Calu3 (cell line): ENCODE measurements at regions of chr3 and their contacts with region 1.

Region 1: DNA sequence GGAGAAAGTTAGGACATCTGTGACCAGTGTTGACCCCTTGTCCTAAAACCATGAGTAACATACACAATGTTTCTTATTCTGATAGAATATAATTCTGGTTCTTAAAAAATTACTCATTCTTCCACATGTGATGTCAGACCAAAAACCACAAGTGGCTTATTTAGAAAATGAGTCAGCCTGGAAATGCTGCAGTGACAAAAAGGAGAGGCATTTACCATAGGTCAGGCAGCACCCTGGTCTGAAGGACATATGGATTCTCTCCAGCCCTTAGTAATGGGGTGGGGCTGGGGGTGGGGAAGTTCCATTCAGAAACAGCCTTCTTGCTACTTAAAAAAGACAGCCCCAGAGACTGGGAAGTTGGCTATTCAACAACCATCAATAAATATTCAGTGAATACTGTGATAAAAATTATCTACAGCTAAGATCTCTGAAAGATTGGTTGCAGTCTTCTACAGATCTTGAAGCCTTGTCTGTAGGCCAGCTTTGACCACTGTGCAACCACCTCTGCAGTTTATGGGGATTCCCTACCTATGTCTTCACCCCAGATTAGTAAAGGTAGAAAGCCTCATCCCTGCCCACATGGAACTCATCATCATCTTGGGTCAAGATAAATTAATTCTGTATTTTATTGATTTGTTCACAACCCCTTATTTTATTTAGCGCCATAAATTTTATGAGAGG is 34.9 kb upstream of the TIMP4 start:
- DNase-seq: peak; percentile 57
- H3K4me3 Mint-ChIP-seq: no peak overlapping the region
- H3K27ac Mint-ChIP-seq: peak overlapping the region; percentile 79
- H3K4me1 Mint-ChIP-seq: peaks cover 67% of the 10 kb centered on the region
- H3K27me3 Mint-ChIP-seq: no peaks in the 10 kb centered on the region
- CTCF ChIP-seq: no peak

Region 2: GRCh38 chr3:12287727-12288191 is 94.1 kb after region 1 on chr3:
- CTCF ChIA-PET with region 1: interaction called, 5 read pairs
- intact Hi-C with region 1: loop called (anchors 5 kb)
- DNase-seq: peak; percentile 63
- H3K4me3 Mint-ChIP-seq: peak overlapping the region; percentile 81
- H3K27ac Mint-ChIP-seq: peak overlapping the region; percentile 84
- H3K4me1 Mint-ChIP-seq: peaks cover 16% of the 10 kb centered on the region
- H3K27me3 Mint-ChIP-seq: no peaks in the 10 kb centered on the region
- CTCF ChIP-seq: no peak

Region 3: GRCh38 chr3:12793701-12794100 is 600.1 kb after region 1 on chr3:
- CTCF ChIA-PET with region 1: no interaction called
- intact Hi-C with region 1: loop called (anchors 5 kb)
- DNase-seq: no peak
- H3K4me3 Mint-ChIP-seq: no peak overlapping the region
- H3K27ac Mint-ChIP-seq: no peak overlapping the region
- H3K4me1 Mint-ChIP-seq: no peaks in the 10 kb centered on the region
- H3K27me3 Mint-ChIP-seq: peaks cover 51% of the 10 kb centered on the region
- CTCF ChIP-seq: no peak